ENCODE measurements at regions of chr1 and their contacts with region 1.

Region 1: DNA sequence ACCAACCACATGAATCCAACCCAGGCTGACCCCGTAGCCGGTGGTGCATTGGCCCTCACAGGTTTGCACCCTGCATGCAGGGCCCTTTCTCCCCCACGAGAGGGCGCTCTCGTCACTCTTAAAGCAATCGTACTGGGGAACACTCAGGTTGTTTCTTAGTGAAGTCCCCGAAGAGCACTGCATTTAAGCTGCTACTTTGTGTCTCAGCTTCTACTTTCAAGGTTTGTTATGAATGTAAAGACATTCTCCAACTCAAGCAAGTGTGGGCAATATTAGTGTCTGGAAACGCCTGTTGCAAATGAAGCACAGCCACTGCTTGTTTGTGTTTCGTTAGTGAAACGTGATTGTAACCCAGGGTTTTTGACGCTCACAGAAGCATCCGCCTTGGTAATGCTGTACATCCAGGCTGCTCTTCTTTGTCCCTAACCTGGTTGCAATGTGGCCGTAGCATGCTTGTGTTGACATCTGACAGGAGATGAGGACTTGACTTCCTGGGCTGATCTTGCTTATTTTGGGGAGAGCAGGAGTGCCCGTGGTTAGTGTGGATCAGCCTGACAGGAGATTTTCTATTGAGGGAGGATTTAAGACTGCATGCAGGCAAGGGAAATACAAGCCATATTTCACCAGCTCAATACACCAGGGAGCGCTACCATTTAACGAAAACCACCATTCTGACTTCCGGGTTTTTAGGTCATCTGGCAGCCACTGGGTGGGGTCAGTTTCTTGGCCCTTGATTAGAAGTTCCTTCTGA is 79.8 kb downstream of the ST6GALNAC3 start:
- DNase-seq: peak; percentile 80
- ATAC-seq: peak; percentile 96
- H3K4me3 ChIP-seq: peak overlapping the region; percentile 65
- H3K27ac ChIP-seq: no peak overlapping the region
- H3K4me1 ChIP-seq: peaks cover 5% of the 10 kb centered on the region; the same call in 1 of the 2 replicates
- H3K27me3 ChIP-seq: peaks cover 40% of the 10 kb centered on the region
- CTCF ChIP-seq: peak; percentile 96

Region 2: DNA sequence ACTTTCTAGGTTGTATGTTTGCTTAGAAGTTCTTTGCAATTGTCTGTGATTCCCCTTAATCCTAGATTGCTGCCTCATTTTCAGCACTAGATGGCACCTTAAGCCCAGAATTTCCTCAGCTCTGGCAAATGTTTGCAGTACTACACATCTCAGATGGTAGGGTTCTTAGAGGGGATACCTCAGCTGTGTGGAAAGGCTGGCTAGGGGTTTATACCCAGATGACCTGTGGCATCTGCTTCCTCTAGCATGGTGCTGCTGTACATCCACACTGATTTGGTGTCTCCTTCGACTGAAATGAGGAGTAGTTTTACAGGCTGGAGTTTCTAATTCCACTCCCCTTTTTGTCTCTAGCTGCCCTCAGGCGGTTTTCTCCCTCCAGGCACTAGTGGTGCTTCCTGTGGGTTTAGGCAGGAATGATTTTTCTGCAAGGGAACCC is 245.6 kb before region 1 on chr1:
- CTCF ChIA-PET with region 1: no interaction called
- POLR2A ChIA-PET with region 1: no interaction called
- intact Hi-C with region 1: loop called (anchors 5 kb)
- DNase-seq: peak; percentile 69
- ATAC-seq: peak; percentile 79
- H3K4me3 ChIP-seq: no peak overlapping the region
- H3K27ac ChIP-seq: no peak overlapping the region
- H3K4me1 ChIP-seq: 0 out of 2 replicates have a peak, but pooled peaks cover 4% of the 10 kb centered on the region
- H3K27me3 ChIP-seq: peaks cover 36% of the 10 kb centered on the region
- CTCF ChIP-seq: peak; percentile 86

Region 3: DNA sequence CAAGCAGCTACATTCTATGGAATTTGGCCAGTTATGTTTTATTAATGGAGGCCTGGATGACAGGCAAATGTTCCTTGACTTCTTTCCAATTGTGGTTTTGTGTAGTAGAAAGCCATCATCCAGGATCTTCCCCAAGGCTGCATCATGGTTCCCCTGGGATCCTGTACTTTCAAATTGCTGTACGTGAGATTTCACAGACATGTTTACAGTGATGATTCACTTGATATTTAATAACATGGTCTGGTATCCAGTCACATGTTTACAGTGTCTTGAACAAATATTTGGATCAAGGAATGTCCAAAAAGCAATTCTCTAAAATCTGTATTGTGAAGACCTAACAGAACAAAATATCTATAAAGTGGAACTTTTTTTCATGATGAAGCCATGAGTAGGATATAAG is 148.1 kb before region 1 on chr1:
- CTCF ChIA-PET with region 1: no interaction called
- POLR2A ChIA-PET with region 1: no interaction called
- intact Hi-C with region 1: no loop called
- DNase-seq: peak; percentile 65
- ATAC-seq: peak; percentile 15; the same call in 1 of the 2 replicates
- H3K4me3 ChIP-seq: no peak overlapping the region
- H3K27ac ChIP-seq: no peak overlapping the region
- H3K4me1 ChIP-seq: peaks cover 11% of the 10 kb centered on the region
- H3K27me3 ChIP-seq: no peaks in the 10 kb centered on the region
- CTCF ChIP-seq: no peak

Region 4: DNA sequence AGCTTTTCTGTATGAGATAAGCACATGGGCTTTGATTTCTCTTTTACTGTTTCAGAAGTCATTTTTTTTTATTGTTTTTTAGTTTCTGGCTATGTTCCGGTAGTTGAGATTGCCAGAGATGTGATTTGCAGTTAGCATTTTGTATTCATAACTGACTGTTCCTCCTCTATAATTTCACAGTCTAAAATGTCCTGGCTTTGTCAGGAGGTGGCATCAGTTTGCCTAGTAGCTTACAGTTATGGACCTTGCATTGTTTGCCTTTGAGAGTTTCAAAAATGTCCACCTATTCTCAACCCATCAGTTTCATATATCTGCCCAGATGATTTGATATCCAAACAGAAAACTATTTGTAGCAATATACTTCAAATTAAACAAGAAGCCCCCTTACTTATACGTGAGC is 119.3 kb before region 1 on chr1:
- CTCF ChIA-PET with region 1: no interaction called
- POLR2A ChIA-PET with region 1: no interaction called
- intact Hi-C with region 1: loop called (anchors 10 kb)
- DNase-seq: peak; percentile 54
- ATAC-seq: peak; percentile 72
- H3K4me3 ChIP-seq: no peak overlapping the region
- H3K27ac ChIP-seq: no peak overlapping the region
- H3K4me1 ChIP-seq: no peaks in the 10 kb centered on the region
- H3K27me3 ChIP-seq: peaks cover 69% of the 10 kb centered on the region
- CTCF ChIP-seq: peak; percentile 63

Measured in PC-3 (cell line).